Endothelial cell of umbilical vein (primary cell): ENCODE measurements at regions of chr17 and their contacts with region 1.

Region 1: GRCh38 chr17:9842057-9842758 is 16.5 kb downstream of the GLP2R start:
- DNase-seq: no peak
- H3K4me3 ChIP-seq: no peak overlapping the region
- H3K27ac ChIP-seq: no peak overlapping the region
- H3K4me1 ChIP-seq: no peaks in the 10 kb centered on the region
- H3K27me3 ChIP-seq: no peaks in the 10 kb centered on the region
- CTCF ChIP-seq: no peak
- POLR2A ChIP-seq: no peak

Region 2: DNA sequence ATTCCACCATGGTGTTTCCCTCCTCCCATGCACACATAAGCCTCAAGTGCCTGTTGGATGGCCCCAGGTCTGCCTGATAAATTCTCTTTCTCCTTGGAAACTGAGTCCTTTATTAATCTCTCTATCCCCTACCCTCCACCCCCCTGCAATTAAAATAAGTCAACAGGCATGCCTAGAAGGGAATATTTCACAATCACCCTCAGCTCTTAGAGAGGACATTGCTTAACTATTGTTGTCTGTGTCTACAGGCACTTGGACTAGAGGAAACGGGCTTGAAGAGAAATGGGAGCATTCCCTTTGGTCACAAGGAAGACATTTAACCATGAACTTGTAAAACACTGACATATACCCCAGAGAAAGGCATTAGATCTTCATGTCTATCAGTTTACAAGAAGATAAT is 23.4 kb after region 1 on chr17:
- CTCF ChIA-PET with region 1: no interaction called
- POLR2A ChIA-PET with region 1: no interaction called
- dilution Hi-C with region 1: no loop called
- intact Hi-C with region 1: loop called (anchors 2 kb)
- DNase-seq: no peak
- H3K4me3 ChIP-seq: no peak overlapping the region
- H3K27ac ChIP-seq: no peak overlapping the region
- H3K4me1 ChIP-seq: no peaks in the 10 kb centered on the region
- H3K27me3 ChIP-seq: no peaks in the 10 kb centered on the region
- CTCF ChIP-seq: no peak
- POLR2A ChIP-seq: no peak

Region 3: GRCh38 chr17:9937241-9937761 is 95.1 kb after region 1 on chr17:
- CTCF ChIA-PET with region 1: no interaction called
- POLR2A ChIA-PET with region 1: no interaction called
- dilution Hi-C with region 1: no loop called
- intact Hi-C with region 1: no loop called
- DNase-seq: no peak
- H3K4me3 ChIP-seq: no peak overlapping the region
- H3K27ac ChIP-seq: no peak overlapping the region
- H3K4me1 ChIP-seq: no peaks in the 10 kb centered on the region
- H3K27me3 ChIP-seq: no peaks in the 10 kb centered on the region
- CTCF ChIP-seq: no peak
- POLR2A ChIP-seq: no peak